ENCODE measurements at regions of chr21 and their contacts with region 1.

Region 1: GRCh38 chr21:33374450-33375096 is 28.6 kb upstream of the IFNGR2 start:
- DNase-seq: no peak
- ATAC-seq: peak; percentile 73

Region 2: GRCh38 chr21:32940079-32941014 is 434.2 kb before region 1 on chr21:
- intact Hi-C with region 1: loop called (anchors 10 kb)
- DNase-seq: peak; percentile 69
- ATAC-seq: no peak